Naive thymus-derived CD4-positive, alpha-beta T cell (primary cell): ENCODE measurements at regions of chr4 and their contacts with region 1.

Region 1: DNA sequence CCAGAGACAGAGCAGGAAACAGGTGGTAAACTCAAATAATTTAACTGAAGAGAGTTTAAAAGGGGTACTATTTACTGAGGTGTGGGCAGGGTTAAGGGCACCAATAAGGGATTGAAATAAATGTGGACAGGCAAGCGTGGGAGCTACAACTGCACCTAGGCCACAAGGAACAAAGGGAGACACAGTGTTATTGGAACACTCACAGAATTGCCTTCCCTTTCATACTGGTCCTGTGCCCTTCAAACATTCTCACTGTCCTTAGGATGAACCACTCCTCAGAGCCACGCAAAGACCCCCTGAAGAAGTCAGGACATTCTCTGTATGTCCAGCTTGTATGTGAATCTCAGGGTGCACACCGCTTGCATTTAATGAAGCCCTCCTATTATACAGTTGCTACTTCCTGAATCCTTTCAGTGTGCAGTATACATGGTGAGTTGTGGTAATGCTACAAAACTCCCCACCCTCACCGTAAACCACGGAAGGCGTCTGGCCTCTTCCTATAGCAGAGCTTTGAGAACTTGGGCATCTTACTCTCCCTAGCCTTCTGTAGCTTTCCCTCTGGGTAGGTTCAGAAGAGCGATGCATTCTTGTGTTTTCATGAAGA is 9.6 kb upstream of the MRPL1 start:
- DNase-seq: peak; percentile 22 to 79 (median 70)
- ATAC-seq: peak; percentile 91
- H3K4me3 ChIP-seq: peak overlapping the region; percentile 50
- H3K4me3 Mint-ChIP-seq: peak overlapping the region; percentile 72 to 93 (median 80)
- H3K27ac ChIP-seq: peak overlapping the region; percentile 77
- H3K27ac Mint-ChIP-seq: peak overlapping the region; percentile 95 to 100 (median 98)
- H3K4me1 ChIP-seq: peaks cover 53 to 57% of the 10 kb centered on the region in 2 donors
- H3K4me1 Mint-ChIP-seq: peaks cover 45 to 62% (median 60%) of the 10 kb centered on the region in 7 donors
- H3K27me3 ChIP-seq: no peaks in the 10 kb centered on the region
- H3K27me3 Mint-ChIP-seq: no peaks in the 10 kb centered on the region

Region 2: GRCh38 chr4:77827343-77827742 is 25.7 kb before region 1 on chr4:
- CTCF ChIA-PET with region 1: interaction called, 6 read pairs
- POLR2A ChIA-PET with region 1: interaction called, 122 read pairs
- intact Hi-C with region 1: loop called in 1 of 2 experiments (anchors 1 kb)
- DNase-seq: peak in 6 of 9 donors; percentile 43 to 70 (median 58)
- ATAC-seq: peak; percentile 84
- H3K4me3 ChIP-seq: no peak overlapping the region
- H3K4me3 Mint-ChIP-seq: peak overlapping the region in 9 of 10 donors; percentile 21 to 77 (median 52)
- H3K27ac ChIP-seq: peak overlapping the region; percentile 52
- H3K27ac Mint-ChIP-seq: peak overlapping the region; percentile 57 to 95 (median 85)
- H3K4me1 ChIP-seq: peaks cover 37 to 42% of the 10 kb centered on the region in 2 donors
- H3K4me1 Mint-ChIP-seq: peaks cover 19 to 64% (median 56%) of the 10 kb centered on the region in 7 donors
- H3K27me3 ChIP-seq: no peaks in the 10 kb centered on the region
- H3K27me3 Mint-ChIP-seq: no peaks in the 10 kb centered on the region